CD8-positive, alpha-beta T cell (primary cell): ENCODE measurements at regions of chr1 and their contacts with region 1.

Region 1: GRCh38 chr1:28877132-28877781 is 37.1 kb upstream of the EPB41 start:
- DNase-seq: peak; percentile 49 to 87 (median 80)
- ATAC-seq: peak; percentile 83
- H3K4me3 ChIP-seq: no peak overlapping the region
- H3K4me3 Mint-ChIP-seq: no peak overlapping the region
- H3K27ac ChIP-seq: no peak overlapping the region
- H3K27ac Mint-ChIP-seq: no peak overlapping the region
- H3K4me1 ChIP-seq: no peaks in the 10 kb centered on the region
- H3K4me1 Mint-ChIP-seq: peaks cover 10% of the 10 kb centered on the region
- H3K27me3 ChIP-seq: no peaks in the 10 kb centered on the region
- H3K27me3 Mint-ChIP-seq: peaks cover 9% of the 10 kb centered on the region
- CTCF ChIP-seq: peak; percentile 97

Region 2: GRCh38 chr1:27858072-27858958 is 1018.9 kb before region 1 on chr1:
- CTCF ChIA-PET with region 1: no interaction called
- POLR2A ChIA-PET with region 1: no interaction called
- intact Hi-C with region 1: loop called in 1 of 2 experiments (anchors 10 kb)
- DNase-seq: peak; percentile 71 to 91 (median 85)
- ATAC-seq: peak; percentile 100
- H3K4me3 ChIP-seq: no peak overlapping the region
- H3K4me3 Mint-ChIP-seq: no peak overlapping the region
- H3K27ac ChIP-seq: no peak overlapping the region
- H3K27ac Mint-ChIP-seq: no peak overlapping the region
- H3K4me1 ChIP-seq: peaks cover 11% of the 10 kb centered on the region
- H3K4me1 Mint-ChIP-seq: peaks cover 17% of the 10 kb centered on the region
- H3K27me3 ChIP-seq: no peaks in the 10 kb centered on the region
- H3K27me3 Mint-ChIP-seq: no peaks in the 10 kb centered on the region
- CTCF ChIP-seq: peak; percentile 100

Region 3: DNA sequence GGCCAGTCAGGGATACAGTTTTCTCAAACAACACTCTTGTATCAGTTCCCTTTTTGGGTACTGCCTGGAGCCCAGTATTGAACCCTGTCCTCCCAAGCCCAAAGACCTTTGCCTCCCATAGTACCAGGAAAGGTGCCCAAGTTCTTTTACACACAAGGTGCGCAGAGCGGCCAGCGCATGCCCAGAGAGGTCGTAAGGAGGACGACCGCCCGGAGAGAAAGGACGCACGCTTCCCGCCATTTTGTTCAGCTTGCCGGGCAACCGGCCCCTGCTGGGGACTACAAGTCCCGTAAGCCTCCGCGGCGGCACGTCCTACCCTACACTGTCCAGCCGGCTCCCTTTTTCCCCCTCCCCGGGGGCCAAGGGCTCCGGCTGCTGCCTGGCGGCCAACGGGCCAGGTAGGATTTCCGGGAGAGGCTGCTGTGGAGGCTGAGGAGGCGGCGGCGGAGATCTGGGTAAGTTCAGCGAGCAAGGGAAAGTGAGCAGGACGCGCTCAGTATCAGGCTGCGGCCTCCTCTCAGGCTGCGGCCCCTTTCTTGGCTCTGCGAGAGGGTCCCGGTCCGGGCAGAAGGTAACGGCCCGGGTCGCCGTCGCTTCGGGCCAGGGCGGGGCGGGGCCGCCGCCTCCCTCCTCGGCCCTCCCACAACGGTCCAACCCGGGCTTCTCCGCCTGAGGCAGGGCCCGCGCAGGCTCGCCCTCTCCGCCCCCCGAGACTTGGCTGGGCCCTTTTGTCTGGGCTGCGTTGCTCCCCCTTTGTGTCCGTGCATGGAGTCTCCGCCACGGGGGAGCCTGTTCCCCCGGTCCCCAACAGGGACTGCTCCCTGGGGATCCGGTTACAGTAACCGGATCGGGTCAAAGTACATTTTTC is 507.7 kb before region 1 on chr1 and contains the start of gene PHACTR4:
- CTCF ChIA-PET with region 1: interaction called, 10 read pairs
- POLR2A ChIA-PET with region 1: no interaction called
- intact Hi-C with region 1: no loop called
- DNase-seq: peak; percentile 44 to 87 (median 76)
- ATAC-seq: peak; percentile 88
- H3K4me3 ChIP-seq: peak within 1 kb of the TSS; percentile 70 to 90
- H3K4me3 Mint-ChIP-seq: peak within 1 kb of the TSS; percentile 96
- H3K27ac ChIP-seq: peak within 1 kb of the TSS; percentile 67 to 83
- H3K27ac Mint-ChIP-seq: peak within 1 kb of the TSS; percentile 94
- H3K4me1 ChIP-seq: peaks cover 5% of the 10 kb centered on the region
- H3K4me1 Mint-ChIP-seq: peaks cover 34% of the 10 kb centered on the region
- H3K27me3 ChIP-seq: no peaks in the 10 kb centered on the region
- H3K27me3 Mint-ChIP-seq: no peaks in the 10 kb centered on the region
- CTCF ChIP-seq: peak; percentile 30
- total RNA-seq, gene PHACTR4: 19.3 to 25.2 TPM

Region 4: DNA sequence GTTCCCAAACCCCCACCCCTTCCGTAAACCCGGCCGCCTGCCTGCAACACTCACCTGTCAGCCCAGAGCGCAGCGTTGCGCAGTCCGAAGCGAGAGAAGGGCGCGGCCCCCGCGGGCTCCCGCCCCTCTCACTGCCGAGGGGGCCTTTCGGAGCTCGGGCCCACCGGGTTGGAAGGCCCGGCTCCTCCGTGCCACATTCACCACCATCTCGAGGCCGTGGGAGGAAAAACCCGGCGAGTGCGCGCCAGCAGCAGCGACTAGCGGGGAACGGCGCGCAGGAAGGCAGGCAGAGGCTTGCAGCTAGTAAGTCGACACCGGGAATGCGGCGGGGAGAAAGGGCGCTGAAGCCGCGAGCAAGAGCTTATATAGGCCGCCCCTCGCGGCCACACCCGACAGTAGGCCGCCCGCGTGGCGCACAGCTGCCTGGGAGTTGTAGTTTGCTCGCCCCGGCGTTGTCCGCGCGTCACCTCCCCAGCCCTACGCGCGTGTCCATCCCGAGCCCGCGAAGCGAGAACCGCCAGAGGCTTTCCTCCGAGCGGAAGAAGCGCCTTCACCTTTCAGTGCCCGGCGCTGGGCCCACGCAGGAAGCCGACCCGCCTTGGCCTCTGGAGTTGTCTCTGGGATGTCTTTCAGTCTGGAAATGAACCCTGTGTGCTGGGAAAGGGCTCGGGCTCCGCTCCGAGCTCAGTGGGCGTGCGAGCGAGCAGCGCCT is 295.6 kb before region 1 on chr1:
- CTCF ChIA-PET with region 1: interaction called, 5 read pairs
- POLR2A ChIA-PET with region 1: interaction called, 5 read pairs
- intact Hi-C with region 1: loop called in 1 of 2 experiments (anchors 5 kb)
- DNase-seq: peak; percentile 87 to 96 (median 91)
- ATAC-seq: peak; percentile 82
- H3K4me3 ChIP-seq: peak overlapping the region; percentile 88 to 91
- H3K4me3 Mint-ChIP-seq: peak overlapping the region; percentile 99
- H3K27ac ChIP-seq: peak overlapping the region; percentile 83 to 88
- H3K27ac Mint-ChIP-seq: peak overlapping the region; percentile 97
- H3K4me1 ChIP-seq: peaks cover 24% of the 10 kb centered on the region
- H3K4me1 Mint-ChIP-seq: peaks cover 37% of the 10 kb centered on the region
- H3K27me3 ChIP-seq: no peaks in the 10 kb centered on the region
- H3K27me3 Mint-ChIP-seq: no peaks in the 10 kb centered on the region
- CTCF ChIP-seq: no peak

Region 5: DNA sequence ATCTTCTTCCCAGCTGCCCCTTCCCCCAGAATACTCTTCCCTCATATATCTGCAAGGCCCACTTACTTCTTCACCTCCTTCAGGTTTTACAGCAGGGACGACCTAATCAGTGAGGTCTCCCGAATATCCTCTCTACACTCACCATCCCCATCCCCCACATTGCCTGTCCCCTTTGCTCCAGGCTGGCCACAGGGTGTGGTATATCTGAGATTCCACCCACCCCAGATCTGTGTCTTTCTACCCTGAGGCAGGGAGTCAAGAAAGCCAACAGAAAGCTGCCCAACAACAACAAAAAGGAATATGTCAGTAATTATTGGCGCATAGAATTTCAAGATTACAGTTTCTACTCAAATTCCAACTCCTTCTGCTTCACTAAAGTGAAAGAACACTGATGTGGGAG is 95.2 kb before region 1 on chr1:
- CTCF ChIA-PET with region 1: interaction called, 143 read pairs
- POLR2A ChIA-PET with region 1: interaction called, 5 read pairs
- intact Hi-C with region 1: loop called (anchors 1 kb)
- DNase-seq: no peak
- ATAC-seq: no peak
- H3K4me3 ChIP-seq: no peak overlapping the region
- H3K4me3 Mint-ChIP-seq: no peak overlapping the region
- H3K27ac ChIP-seq: no peak overlapping the region
- H3K27ac Mint-ChIP-seq: no peak overlapping the region
- H3K4me1 ChIP-seq: no peaks in the 10 kb centered on the region
- H3K4me1 Mint-ChIP-seq: peaks cover 7% of the 10 kb centered on the region
- H3K27me3 ChIP-seq: no peaks in the 10 kb centered on the region
- H3K27me3 Mint-ChIP-seq: peaks cover 2% of the 10 kb centered on the region
- CTCF ChIP-seq: no peak

Region 6: GRCh38 chr1:28893403-28894102 is 16.3 kb after region 1 on chr1:
- CTCF ChIA-PET with region 1: interaction called, 22 read pairs
- POLR2A ChIA-PET with region 1: no interaction called
- intact Hi-C with region 1: no loop called
- DNase-seq: peak in 4 of 9 experiments; percentile 32 to 43 (median 36)
- ATAC-seq: peak; percentile 73
- H3K4me3 ChIP-seq: no peak overlapping the region
- H3K4me3 Mint-ChIP-seq: no peak overlapping the region
- H3K27ac ChIP-seq: no peak overlapping the region
- H3K27ac Mint-ChIP-seq: no peak overlapping the region
- H3K4me1 ChIP-seq: no peaks in the 10 kb centered on the region
- H3K4me1 Mint-ChIP-seq: peaks cover 46% of the 10 kb centered on the region
- H3K27me3 ChIP-seq: no peaks in the 10 kb centered on the region
- H3K27me3 Mint-ChIP-seq: no peaks in the 10 kb centered on the region
- CTCF ChIP-seq: peak; percentile 29

Region 7: GRCh38 chr1:28971980-28972771 is 94.9 kb after region 1 on chr1:
- CTCF ChIA-PET with region 1: no interaction called
- POLR2A ChIA-PET with region 1: no interaction called
- intact Hi-C with region 1: no loop called
- DNase-seq: no peak
- ATAC-seq: no peak
- H3K4me3 ChIP-seq: no peak overlapping the region
- H3K4me3 Mint-ChIP-seq: no peak overlapping the region
- H3K27ac ChIP-seq: no peak overlapping the region
- H3K27ac Mint-ChIP-seq: peak overlapping the region; percentile 80
- H3K4me1 ChIP-seq: peaks cover 20% of the 10 kb centered on the region
- H3K4me1 Mint-ChIP-seq: peaks cover 68% of the 10 kb centered on the region
- H3K27me3 ChIP-seq: no peaks in the 10 kb centered on the region
- H3K27me3 Mint-ChIP-seq: no peaks in the 10 kb centered on the region
- CTCF ChIP-seq: no peak